ENCODE measurements at regions of chr9 and their contacts with region 1.

Region 1: DNA sequence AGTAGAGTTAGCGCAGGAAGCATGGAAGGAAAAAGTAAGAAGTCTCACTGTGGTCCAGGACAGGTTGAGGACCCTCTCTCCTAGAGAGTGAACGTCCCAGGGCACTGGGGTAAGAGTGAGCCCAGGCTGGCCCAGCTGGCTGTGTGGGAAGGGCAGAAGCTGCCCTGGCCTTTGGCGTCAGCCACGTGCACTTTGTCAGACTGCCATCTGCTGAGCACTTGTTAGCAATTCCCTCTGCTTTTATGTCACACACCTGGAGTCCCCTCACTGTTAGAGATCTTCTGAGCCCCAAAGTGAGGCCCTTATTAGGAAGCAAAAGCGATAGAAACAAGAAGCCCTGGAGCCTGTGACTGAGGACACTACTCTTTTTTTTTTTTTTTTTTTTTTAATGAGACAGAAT is 79.1 kb downstream of the UGCG start:
- DNase-seq: peak; percentile 51
- H3K4me3 ChIP-seq: no peak overlapping the region
- H3K27ac ChIP-seq: no peak overlapping the region
- H3K4me1 ChIP-seq: no peaks in the 10 kb centered on the region
- CTCF ChIP-seq: peak; percentile 68

Region 2: GRCh38 chr9:111759762-111760639 is 215.7 kb before region 1 on chr9:
- CTCF ChIA-PET with region 1: no interaction called
- POLR2A ChIA-PET with region 1: interaction called, 3 read pairs
- intact Hi-C with region 1: loop called (anchors 1 kb)
- DNase-seq: peak; percentile 71
- H3K4me3 ChIP-seq: no peak overlapping the region
- H3K27ac ChIP-seq: no peak overlapping the region
- H3K4me1 ChIP-seq: no peaks in the 10 kb centered on the region
- CTCF ChIP-seq: peak; percentile 85

Region 3: DNA sequence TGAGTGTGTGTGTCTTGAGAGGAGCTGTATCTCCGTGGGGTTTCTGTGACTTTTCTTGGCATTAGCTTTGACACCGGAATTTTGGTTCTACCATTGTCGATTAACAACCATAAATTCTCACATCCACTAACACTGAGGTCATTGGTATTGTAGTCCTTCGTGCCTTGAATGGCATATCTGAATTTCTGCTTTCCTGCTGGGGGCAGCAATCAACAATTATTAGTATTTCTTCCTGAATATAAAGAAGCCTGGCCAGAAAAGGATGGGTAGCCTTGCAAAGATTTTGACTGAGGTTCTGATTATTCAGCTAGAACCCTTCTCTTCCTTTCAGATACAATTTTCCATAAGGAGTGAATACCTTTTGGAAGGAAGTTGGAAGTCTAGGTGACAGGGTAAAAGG is 147.5 kb before region 1 on chr9:
- CTCF ChIA-PET with region 1: interaction called, 3 read pairs
- POLR2A ChIA-PET with region 1: no interaction called
- intact Hi-C with region 1: loop called (anchors 2 kb)
- DNase-seq: peak; percentile 23
- H3K4me3 ChIP-seq: no peak overlapping the region
- H3K27ac ChIP-seq: no peak overlapping the region
- H3K4me1 ChIP-seq: no peaks in the 10 kb centered on the region
- CTCF ChIP-seq: peak; percentile 70

Region 4: DNA sequence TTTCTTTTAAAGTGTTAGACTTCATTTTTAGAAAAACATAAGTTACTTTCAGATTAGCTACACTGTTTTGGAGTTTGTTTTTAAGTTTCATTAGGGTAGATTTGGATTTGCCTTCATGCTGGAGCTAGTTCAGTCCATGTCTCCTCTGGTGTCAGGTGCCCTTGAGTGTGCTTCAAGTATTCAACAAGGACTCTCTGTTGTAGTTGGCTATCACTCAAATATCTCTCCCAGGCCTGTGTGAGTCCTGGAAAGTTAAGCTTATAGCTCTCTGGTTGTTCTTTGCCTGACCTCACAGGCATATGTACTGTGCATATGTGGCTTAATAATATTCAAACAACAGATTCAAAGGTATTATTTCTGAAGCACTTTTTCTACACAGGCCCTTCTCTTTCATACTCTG is 312.3 kb after region 1 on chr9:
- CTCF ChIA-PET with region 1: no interaction called
- POLR2A ChIA-PET with region 1: no interaction called
- intact Hi-C with region 1: no loop called
- DNase-seq: no peak
- H3K4me3 ChIP-seq: no peak overlapping the region
- H3K27ac ChIP-seq: no peak overlapping the region
- H3K4me1 ChIP-seq: no peaks in the 10 kb centered on the region
- CTCF ChIP-seq: no peak